ENCODE measurements at regions of chr7 and their contacts with region 1.

Region 1: GRCh38 chr7:129009437-129009836 is 45.5 kb downstream of the TNPO3 start:
- DNase-seq: peak; percentile 13
- ATAC-seq: peak; percentile 15
- H3K4me3 Mint-ChIP-seq: no peak overlapping the region
- H3K27ac Mint-ChIP-seq: peak overlapping the region; percentile 91
- H3K4me1 Mint-ChIP-seq: peaks cover 43% of the 10 kb centered on the region
- H3K27me3 Mint-ChIP-seq: no peaks in the 10 kb centered on the region
- CTCF ChIP-seq: no peak

Region 2: DNA sequence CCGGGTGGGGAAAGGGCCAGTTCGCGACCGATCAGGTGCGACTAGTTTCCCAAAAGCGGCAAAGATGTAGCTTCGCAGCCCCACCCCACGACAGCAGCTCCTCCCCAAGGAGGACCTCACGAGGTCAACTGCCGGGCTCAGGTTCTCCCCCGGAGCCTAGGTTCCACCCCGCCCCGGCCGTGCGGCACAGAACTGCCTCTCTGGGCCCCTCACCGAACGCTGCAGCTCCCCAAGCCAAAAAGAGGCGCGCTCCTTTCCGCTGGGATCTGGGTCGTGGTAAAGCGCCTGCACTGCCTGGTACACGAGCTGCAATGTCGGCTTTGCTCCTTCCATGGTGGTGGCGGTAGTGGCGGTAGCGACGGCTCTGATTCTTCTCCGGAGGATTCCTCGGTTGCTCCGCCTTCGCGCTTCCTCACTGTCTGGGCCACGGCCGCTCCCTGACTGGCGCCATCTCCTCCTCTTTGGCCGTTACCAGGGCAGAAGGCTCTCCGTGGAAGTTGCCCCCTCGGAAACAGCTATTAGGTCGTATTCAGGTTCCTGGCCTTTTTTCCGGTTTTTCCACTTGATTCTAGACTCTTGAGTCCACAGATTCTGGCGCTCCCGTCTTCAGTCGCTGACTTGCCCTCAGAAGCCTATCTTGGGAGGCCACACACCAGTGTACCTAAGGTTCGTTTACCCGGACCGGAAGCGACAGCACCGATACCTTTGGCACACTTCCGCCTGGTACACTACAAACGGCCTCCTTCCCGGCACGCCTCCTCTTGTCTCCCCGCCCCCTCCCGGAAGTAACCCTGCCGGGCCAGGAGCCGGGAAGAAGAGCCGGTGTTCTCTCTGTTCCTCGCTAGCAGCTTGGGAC is 45.2 kb after region 1 on chr7 and contains the start of gene TNPO3:
- CTCF ChIA-PET with region 1: no interaction called
- POLR2A ChIA-PET with region 1: interaction called, 11 read pairs
- intact Hi-C with region 1: no loop called
- DNase-seq: peak; percentile 94
- ATAC-seq: peak; percentile 92
- H3K4me3 Mint-ChIP-seq: peak within 1 kb of the TSS; percentile 90
- H3K27ac Mint-ChIP-seq: peak within 1 kb of the TSS; percentile 99
- H3K4me1 Mint-ChIP-seq: peaks cover 26% of the 10 kb centered on the region
- H3K27me3 Mint-ChIP-seq: no peaks in the 10 kb centered on the region
- CTCF ChIP-seq: no peak
- total RNA-seq, gene TNPO3: 58.4 to 59.3 TPM